Mammary epithelial cell (primary cell): ENCODE measurements at regions of chr1 and their contacts with region 1.

Region 1: DNA sequence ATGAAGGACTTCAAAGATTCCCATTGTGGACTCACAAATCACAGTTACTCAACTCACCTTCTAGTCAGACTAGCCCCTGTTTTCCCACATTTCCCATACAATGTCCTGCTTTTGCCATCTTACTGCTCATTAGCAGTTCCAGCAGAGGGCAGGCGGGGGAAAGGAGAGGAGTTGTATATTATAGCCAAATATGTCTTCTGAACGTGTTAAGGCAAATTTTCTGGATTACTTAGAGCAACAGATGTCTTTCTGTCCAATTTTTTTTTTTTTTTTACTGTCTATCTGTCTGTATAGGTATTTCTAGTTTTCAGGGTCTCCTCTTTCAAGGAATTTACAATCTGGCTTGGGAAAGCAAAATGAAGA is 29.9 kb upstream of the DDAH1 start:
- DNase-seq: peak; percentile 70
- H3K4me3 ChIP-seq: no peak overlapping the region
- H3K27ac ChIP-seq: peak overlapping the region; percentile 67
- H3K4me1 ChIP-seq: peaks cover 24% of the 10 kb centered on the region
- H3K27me3 ChIP-seq: no peaks in the 10 kb centered on the region
- CTCF ChIP-seq: peak; percentile 81 to 84

Region 2: DNA sequence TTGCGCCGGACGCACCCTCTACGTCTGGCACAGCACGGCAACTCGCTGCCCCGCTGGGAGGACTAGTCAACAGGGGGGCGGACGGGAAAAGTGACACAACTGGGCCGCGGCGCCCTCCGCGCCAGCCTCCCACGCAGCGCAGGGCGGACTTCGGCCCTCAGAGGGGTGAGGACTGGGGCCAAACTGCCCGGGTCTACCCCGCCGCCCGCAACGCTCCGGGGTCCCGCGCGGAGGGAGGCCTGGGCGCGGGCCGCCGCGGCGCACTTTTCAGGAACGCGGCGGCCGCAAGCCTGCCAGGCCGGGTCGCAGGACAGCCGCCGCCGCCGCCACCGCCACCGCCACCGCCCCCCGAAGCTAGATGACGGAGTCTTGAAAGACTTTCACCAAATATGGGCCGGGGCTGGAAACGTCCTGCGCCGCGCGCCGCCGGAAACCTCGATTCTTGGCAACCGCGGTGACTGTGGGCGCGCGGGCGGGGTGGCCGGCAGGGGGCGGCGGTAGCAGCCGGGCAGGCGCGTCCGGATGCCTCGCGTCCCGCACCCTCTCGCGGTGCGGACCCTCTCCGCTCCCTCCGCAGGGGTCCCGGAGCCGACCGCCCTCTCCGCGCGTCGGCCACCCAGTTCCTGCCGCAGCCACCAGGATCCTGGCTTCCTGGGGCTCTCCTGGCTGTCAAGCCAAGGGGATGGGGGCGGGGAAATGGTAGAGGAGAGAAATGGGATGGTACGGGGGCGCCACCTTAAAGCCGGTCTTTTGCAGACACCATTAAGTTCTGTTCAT is 81.9 kb after region 1 on chr1:
- CTCF ChIA-PET with region 1: interaction called, 5 read pairs
- dilution Hi-C with region 1: no loop called
- in situ Hi-C with region 1: loop called in 1 of 2 experiments (anchors 10 kb)
- intact Hi-C with region 1: loop called (anchors 1 kb)
- DNase-seq: peak; percentile 62
- H3K4me3 ChIP-seq: peak overlapping the region; percentile 61 to 76 (median 64)
- H3K27ac ChIP-seq: peak overlapping the region; percentile 62
- H3K4me1 ChIP-seq: peaks cover 52% of the 10 kb centered on the region
- H3K27me3 ChIP-seq: no peaks in the 10 kb centered on the region
- CTCF ChIP-seq: peak; percentile 42 to 64

Region 3: DNA sequence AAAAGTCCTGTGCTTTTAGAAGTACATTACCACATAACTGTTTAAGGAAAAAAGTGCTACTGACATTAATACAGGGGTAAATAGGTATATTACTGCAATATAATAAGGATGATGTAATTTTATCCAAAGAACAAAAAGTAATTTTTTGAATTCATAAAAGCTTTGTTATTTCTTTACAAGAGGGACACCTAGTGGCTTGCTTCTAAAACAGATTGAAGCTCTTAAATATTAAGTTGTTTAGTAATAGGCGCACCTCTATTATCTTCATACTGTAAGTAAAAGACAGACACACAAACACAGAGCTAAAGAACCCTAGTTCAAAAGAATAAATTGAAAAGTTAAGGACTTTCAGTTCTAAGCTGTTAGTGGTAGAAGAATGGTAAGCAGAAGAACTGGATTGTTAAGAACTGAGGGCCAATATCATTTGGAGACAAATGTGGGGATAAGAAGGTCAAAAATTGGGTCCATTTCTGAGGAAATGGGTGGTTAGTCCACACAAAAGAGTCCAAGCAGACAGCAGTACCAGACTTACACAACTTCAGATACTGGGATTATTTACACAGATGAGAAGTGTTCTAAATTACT is 197.9 kb after region 1 on chr1:
- CTCF ChIA-PET with region 1: no interaction called
- dilution Hi-C with region 1: no loop called
- in situ Hi-C with region 1: loop called (anchors 25 kb)
- intact Hi-C with region 1: loop called (anchors 1 kb)
- DNase-seq: peak; percentile 17
- H3K4me3 ChIP-seq: no peak overlapping the region
- H3K27ac ChIP-seq: no peak overlapping the region
- H3K4me1 ChIP-seq: no peaks in the 10 kb centered on the region
- H3K27me3 ChIP-seq: no peaks in the 10 kb centered on the region
- CTCF ChIP-seq: peak; percentile 41 to 44

Region 4: GRCh38 chr1:85850238-85850637 is 355.4 kb after region 1 on chr1:
- CTCF ChIA-PET with region 1: no interaction called
- dilution Hi-C with region 1: no loop called
- in situ Hi-C with region 1: no loop called
- intact Hi-C with region 1: loop called (anchors 10 kb)
- DNase-seq: peak; percentile 79
- H3K4me3 ChIP-seq: no peak overlapping the region
- H3K27ac ChIP-seq: no peak overlapping the region
- H3K4me1 ChIP-seq: peaks cover 13% of the 10 kb centered on the region
- H3K27me3 ChIP-seq: peaks cover 12% of the 10 kb centered on the region
- CTCF ChIP-seq: peak in 1 of 2 donors; percentile 50

Region 5: GRCh38 chr1:85894651-85895050 is 399.8 kb after region 1 on chr1:
- CTCF ChIA-PET with region 1: no interaction called
- dilution Hi-C with region 1: no loop called
- in situ Hi-C with region 1: loop called in 1 of 2 experiments (anchors 25 kb)
- intact Hi-C with region 1: loop called (anchors 10 kb)
- DNase-seq: no peak
- H3K4me3 ChIP-seq: no peak overlapping the region
- H3K27ac ChIP-seq: no peak overlapping the region
- H3K4me1 ChIP-seq: no peaks in the 10 kb centered on the region
- H3K27me3 ChIP-seq: no peaks in the 10 kb centered on the region
- CTCF ChIP-seq: peak; percentile 39 to 41

Region 6: DNA sequence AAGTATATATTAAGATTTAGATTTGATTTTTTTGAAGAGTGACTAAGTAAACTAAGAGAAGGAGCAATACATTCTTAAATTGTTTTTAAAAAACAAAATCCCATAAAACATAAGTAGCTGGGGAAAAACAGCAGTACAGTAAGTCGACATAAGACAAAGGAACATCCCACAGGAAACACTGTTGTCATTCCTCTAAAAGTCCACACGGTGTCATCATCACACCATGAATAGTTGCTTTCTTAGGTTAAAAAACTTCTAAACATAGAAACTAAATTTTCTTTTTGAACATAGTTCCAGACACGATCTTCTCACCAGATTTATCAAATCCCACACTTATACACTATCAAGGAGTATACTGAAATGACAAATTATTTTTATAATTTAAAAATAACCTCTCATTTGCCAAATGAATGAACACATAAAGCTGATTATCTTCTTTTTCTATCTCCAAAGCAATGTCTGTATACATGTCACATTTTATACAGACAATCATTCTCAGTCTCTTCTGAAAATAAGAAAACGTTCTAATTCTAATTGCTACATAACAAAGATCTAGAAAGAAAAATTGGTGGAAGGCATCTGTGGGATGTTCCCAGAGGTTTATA is 885.5 kb after region 1 on chr1:
- CTCF ChIA-PET with region 1: no interaction called
- dilution Hi-C with region 1: no loop called
- in situ Hi-C with region 1: no loop called
- intact Hi-C with region 1: no loop called
- DNase-seq: peak; percentile 51
- H3K4me3 ChIP-seq: no peak overlapping the region
- H3K27ac ChIP-seq: no peak overlapping the region
- H3K4me1 ChIP-seq: no peaks in the 10 kb centered on the region
- H3K27me3 ChIP-seq: no peaks in the 10 kb centered on the region
- CTCF ChIP-seq: peak; percentile 58 to 70